PC-9 (cell line): ENCODE measurements at regions of chr12 and their contacts with region 1.

Region 1: DNA sequence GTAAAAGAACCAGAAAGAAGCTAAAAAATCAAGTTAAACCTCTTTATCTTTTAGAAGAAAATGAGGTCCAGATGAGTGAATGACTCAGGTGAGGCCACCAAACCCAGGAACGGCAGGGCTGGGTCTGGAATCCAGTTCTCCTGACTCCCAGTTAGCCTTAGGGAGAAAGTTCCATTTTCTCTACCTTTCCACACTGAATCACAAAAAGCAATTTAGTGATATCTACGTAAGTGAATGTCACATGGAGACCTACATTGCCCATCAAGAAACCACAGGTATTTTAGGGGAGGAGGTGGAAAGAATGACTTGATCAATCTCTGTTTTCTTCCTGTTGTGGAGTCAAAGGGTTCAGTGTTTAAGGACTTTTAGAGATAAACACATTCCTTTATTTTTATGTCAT is 106.9 kb upstream of the PTPRB start:
- DNase-seq: peak; percentile 64 to 87
- H3K4me3 ChIP-seq: no peak overlapping the region
- H3K27ac ChIP-seq: peak overlapping the region; percentile 59
- H3K4me1 ChIP-seq: peaks cover 23% of the 10 kb centered on the region
- H3K27me3 ChIP-seq: no peaks in the 10 kb centered on the region
- CTCF ChIP-seq: no peak

Region 2: GRCh38 chr12:70733385-70733784 is 10.7 kb before region 1 on chr12:
- CTCF ChIA-PET with region 1: no interaction called
- POLR2A ChIA-PET with region 1: no interaction called
- intact Hi-C with region 1: no loop called
- DNase-seq: peak; percentile 30 to 43
- H3K4me3 ChIP-seq: no peak overlapping the region
- H3K27ac ChIP-seq: no peak overlapping the region
- H3K4me1 ChIP-seq: no peaks in the 10 kb centered on the region
- H3K27me3 ChIP-seq: no peaks in the 10 kb centered on the region
- CTCF ChIP-seq: peak; percentile 85

Region 3: DNA sequence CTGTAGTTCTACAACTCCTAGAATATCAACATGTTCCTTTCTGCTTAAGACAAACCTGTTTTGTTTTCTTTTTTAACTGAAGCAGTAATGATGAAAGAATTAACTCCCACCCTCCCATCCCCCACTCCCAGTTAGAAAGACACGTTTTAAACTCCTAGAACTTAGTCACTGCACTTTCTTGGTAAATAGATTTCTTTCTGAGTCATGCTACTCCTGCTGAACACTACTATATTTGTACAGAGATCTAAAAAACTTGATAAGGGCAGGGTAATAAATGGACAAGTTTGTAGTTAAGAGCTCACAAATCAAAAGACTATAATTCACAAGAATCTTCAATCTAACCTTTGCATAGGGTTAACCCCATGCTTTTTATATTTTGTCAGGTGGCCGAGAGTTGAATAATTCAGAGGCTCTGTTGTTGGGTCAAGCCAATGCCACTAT is 12.0 kb after region 1 on chr12:
- CTCF ChIA-PET with region 1: no interaction called
- POLR2A ChIA-PET with region 1: no interaction called
- intact Hi-C with region 1: loop called (anchors 1 kb)
- DNase-seq: peak in 1 of 2 experiments; percentile 86
- H3K4me3 ChIP-seq: peak overlapping the region; percentile 30; the same call in 1 of the 2 replicates
- H3K27ac ChIP-seq: peak overlapping the region; percentile 79
- H3K4me1 ChIP-seq: peaks cover 31% of the 10 kb centered on the region
- H3K27me3 ChIP-seq: no peaks in the 10 kb centered on the region
- CTCF ChIP-seq: no peak

Region 4: GRCh38 chr12:70815971-70816391 is 71.8 kb after region 1 on chr12:
- CTCF ChIA-PET with region 1: no interaction called
- POLR2A ChIA-PET with region 1: no interaction called
- intact Hi-C with region 1: loop called (anchors 1 kb)
- DNase-seq: peak in 1 of 2 experiments; percentile 89
- H3K4me3 ChIP-seq: 0 out of 2 replicates have a peak overlapping the region, but pooled peaks have one; percentile 20
- H3K27ac ChIP-seq: peak overlapping the region; percentile 80
- H3K4me1 ChIP-seq: peaks cover 26% of the 10 kb centered on the region
- H3K27me3 ChIP-seq: no peaks in the 10 kb centered on the region
- CTCF ChIP-seq: no peak